GM18951 (cell line): ENCODE measurements at regions of chr7 and their contacts with region 1.

Region 1: DNA sequence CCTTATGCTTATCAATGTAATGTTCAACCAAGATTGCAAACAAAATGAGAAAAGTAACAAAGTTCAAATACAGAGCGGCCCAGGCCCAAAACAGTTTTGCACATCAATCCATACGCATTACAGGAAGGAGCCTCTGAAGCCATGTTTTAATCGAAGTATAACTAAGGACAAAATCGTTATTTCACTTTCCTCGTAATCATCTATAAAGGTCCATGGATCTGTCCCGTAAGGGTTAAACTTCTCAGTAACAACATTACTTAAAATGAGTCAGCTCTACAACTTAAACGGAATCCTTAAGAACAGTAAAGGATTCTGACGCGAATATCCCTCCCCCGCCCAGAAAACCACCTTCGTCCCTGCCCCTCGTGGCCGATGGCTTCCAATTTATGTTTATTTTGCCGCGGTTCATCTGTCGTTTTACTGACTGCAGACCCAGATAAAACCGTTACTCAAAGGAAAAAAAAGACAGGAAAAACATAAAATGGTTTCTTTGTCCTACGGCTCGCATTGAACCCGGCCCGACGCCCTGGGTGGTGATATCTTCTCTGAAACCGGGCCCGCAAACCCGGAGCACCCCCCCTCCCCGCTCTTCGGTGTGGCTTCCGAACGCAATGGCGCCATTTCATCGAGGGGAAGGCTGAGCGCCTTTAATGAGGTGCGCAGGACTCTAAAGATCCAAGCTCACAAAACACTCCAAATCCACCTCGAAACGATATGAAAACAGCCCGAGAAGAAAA is 1.1 kb downstream of the HNRNPA2B1 start:
- POLR2A ChIP-seq: no peak

Region 2: DNA sequence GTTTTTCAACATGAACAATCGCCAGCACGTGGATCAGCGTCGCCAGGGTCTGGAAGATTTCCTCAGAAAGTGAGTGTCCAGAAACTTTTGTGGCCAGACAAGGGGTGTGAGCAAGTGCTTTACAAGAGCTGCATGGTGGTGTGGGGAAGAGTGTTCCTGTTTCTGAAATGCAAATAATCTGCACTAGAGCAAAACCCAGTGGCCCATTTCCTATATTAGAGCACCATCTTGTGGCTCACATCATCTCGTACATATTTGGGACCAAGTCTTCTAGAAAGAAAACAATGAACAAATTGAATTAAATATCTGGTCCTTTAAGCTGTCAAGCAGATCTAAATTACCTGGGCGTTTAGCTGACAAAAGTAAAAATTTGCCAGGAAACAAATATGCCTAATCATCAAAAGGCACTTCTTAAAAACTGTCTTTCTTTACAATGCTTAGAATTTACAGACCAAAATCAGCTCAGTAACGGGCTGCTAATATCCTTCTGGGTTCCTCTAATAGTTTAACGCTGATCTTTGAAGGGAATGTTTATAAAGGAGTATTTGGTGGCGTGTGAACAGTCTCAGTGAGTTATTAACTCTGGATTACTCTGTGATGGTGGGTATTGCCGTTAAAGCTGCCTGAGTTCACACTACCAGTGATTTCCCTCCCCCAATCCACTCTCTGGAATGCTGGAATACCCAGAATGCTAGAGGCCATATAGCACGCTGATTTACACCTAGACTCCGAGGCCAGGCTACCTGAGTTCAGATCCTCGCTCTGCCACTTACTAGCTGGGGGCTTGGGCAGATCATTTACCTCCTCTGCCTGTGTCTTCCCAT is 165.8 kb after region 1 on chr7:
- in situ Hi-C with region 1: loop called (anchors 10 kb)
- POLR2A ChIP-seq: no peak